OCI-LY7 (cell line): ENCODE measurements at regions of chr4 and their contacts with region 1.

Region 1: GRCh38 chr4:108160741-108161352 is 7.9 kb downstream of the LEF1 start:
- DNase-seq: peak; percentile 82
- H3K4me3 ChIP-seq: peak overlapping the region; percentile 83
- H3K27ac ChIP-seq: peak overlapping the region; percentile 89
- H3K4me1 ChIP-seq: peaks cover 79% of the 10 kb centered on the region
- CTCF ChIP-seq: no peak

Region 2: GRCh38 chr4:108043526-108043925 is 117.3 kb before region 1 on chr4:
- CTCF ChIA-PET with region 1: no interaction called
- POLR2A ChIA-PET with region 1: interaction called, 205 read pairs
- intact Hi-C with region 1: no loop called
- DNase-seq: peak; percentile 62
- H3K4me3 ChIP-seq: peak overlapping the region; percentile 11
- H3K27ac ChIP-seq: peak overlapping the region; percentile 87
- H3K4me1 ChIP-seq: peaks cover 62% of the 10 kb centered on the region
- CTCF ChIP-seq: no peak

Region 3: GRCh38 chr4:108113229-108113628 is 47.6 kb before region 1 on chr4:
- CTCF ChIA-PET with region 1: no interaction called
- POLR2A ChIA-PET with region 1: interaction called, 10 read pairs
- intact Hi-C with region 1: loop called (anchors 2 kb)
- DNase-seq: no peak
- H3K4me3 ChIP-seq: no peak overlapping the region
- H3K27ac ChIP-seq: no peak overlapping the region
- H3K4me1 ChIP-seq: peaks cover 88% of the 10 kb centered on the region
- CTCF ChIP-seq: no peak

Region 4: GRCh38 chr4:108118490-108118889 is 42.4 kb before region 1 on chr4:
- CTCF ChIA-PET with region 1: no interaction called
- POLR2A ChIA-PET with region 1: interaction called, 11 read pairs
- intact Hi-C with region 1: loop called (anchors 2 kb)
- DNase-seq: peak; percentile 20
- H3K4me3 ChIP-seq: no peak overlapping the region
- H3K27ac ChIP-seq: peak overlapping the region; percentile 0
- H3K4me1 ChIP-seq: peaks cover 77% of the 10 kb centered on the region
- CTCF ChIP-seq: no peak

Region 5: DNA sequence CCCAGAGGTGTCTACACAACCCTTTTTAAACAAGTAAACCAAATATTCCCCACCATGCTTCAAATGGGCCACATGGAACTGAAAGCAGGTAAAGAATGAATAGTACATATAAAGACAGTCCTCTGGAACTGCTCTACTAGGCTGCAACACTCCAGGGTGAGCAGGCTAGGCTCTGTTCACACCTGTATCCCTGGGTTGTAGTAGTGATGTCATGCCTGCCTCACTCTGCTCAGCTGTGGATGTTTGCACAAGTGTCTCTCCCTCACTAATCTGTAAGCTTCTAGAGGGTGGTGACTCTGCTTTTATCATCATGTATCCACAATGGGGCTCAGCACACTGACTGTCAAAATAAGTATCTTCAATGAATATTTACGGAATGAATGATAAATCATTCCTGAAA is 12.5 kb before region 1 on chr4:
- CTCF ChIA-PET with region 1: no interaction called
- POLR2A ChIA-PET with region 1: interaction called, 26 read pairs
- intact Hi-C with region 1: no loop called
- DNase-seq: no peak
- H3K4me3 ChIP-seq: no peak overlapping the region
- H3K27ac ChIP-seq: no peak overlapping the region
- H3K4me1 ChIP-seq: peaks cover 25% of the 10 kb centered on the region
- CTCF ChIP-seq: no peak

Region 6: DNA sequence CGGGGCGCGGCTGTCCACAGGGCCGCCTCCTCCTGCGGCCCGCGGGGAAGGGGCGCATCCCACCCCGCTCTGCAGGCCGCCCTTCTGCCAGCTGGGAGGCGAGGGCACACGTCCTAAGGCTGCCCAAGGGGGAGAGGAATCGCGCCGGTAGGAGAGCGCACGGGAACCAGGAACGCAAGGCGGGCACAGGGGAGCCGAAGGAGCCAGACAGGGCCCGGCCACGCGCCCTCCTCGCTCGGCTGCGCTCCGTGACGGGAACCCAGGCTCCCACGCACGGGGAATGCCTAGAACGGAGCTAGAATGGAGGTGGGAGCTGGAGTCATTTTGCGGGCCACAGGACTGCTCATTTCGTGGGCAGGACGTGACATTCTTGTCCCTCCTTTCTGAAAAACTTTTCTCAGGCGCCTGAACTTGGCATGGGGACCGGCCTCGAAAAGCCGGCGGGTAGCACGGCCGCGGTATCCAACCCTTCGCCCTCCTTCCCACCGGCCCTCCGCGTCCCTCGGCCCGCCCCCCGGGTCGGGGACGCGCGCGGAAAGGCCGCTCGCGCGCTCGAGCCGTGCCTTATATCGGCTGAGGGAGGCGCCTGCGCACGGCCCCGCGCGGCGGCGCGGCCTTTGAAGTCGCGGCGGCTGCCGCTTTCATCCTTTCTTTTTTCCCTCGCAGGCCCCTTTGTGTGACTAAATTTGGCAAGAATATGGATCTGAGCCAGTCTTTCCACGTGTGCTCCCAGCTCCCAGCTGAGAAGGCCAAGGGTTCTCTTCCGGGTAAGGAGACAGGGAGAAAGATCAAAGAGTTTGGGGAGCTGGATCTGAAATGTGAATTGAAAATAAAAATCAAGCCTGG is 12.1 kb after region 1 on chr4:
- CTCF ChIA-PET with region 1: no interaction called
- POLR2A ChIA-PET with region 1: interaction called, 14 read pairs
- intact Hi-C with region 1: no loop called
- DNase-seq: peak; percentile 64
- H3K4me3 ChIP-seq: peak overlapping the region; percentile 67
- H3K27ac ChIP-seq: no peak overlapping the region
- H3K4me1 ChIP-seq: peaks cover 49% of the 10 kb centered on the region
- CTCF ChIP-seq: no peak; the same call in 1 of the 2 replicates

Region 7: GRCh38 chr4:108519911-108520601 is 359.2 kb after region 1 on chr4:
- CTCF ChIA-PET with region 1: no interaction called
- POLR2A ChIA-PET with region 1: no interaction called
- intact Hi-C with region 1: no loop called
- DNase-seq: no peak
- H3K4me3 ChIP-seq: no peak overlapping the region
- H3K27ac ChIP-seq: no peak overlapping the region
- H3K4me1 ChIP-seq: no peaks in the 10 kb centered on the region
- CTCF ChIP-seq: no peak